MCF 10A (cell line): ENCODE measurements at regions of chr10 and their contacts with region 1.

Region 1: GRCh38 chr10:97072851-97073665 is 112.7 kb downstream of the SLIT1 start:
- DNase-seq: peak; percentile 79
- H3K4me3 Mint-ChIP-seq: no peak overlapping the region
- H3K27ac Mint-ChIP-seq: no peak overlapping the region
- H3K4me1 Mint-ChIP-seq: peaks cover 5% of the 10 kb centered on the region
- H3K27me3 Mint-ChIP-seq: peaks cover 35% of the 10 kb centered on the region
- CTCF ChIP-seq: peak; percentile 94

Region 2: DNA sequence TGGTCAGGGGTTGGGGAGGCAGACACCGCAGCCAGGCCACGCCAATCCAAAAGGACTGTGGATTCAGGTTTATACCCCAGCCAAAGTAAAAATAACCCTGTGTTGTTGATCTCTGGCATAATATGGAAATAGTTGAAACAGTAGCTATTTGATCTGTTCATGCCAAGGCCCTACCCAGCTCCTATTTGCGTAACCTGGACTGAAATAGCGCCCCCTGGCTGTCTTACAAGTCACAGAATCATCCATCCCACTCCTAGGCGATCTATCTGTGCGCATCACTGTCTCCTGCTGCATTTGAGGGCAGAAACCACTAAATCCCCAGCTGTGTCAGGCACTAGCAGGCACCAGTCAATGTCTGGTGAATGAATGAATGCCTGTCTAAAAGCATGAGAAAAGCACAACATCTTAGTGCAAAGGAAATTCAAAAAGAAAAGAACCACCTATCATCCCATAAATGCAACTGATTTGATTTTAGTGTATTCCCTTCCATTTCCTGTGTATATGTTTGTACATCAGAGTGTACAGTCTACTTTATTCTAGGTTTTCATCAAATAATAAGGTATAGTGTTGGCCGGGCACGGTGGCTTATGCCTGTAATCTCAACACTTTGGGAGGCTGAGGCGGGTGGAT is 47.3 kb before region 1 on chr10:
- CTCF ChIA-PET with region 1: interaction called, 11 read pairs
- POLR2A ChIA-PET with region 1: no interaction called
- intact Hi-C with region 1: no loop called
- DNase-seq: peak; percentile 76
- H3K4me3 Mint-ChIP-seq: no peak overlapping the region
- H3K27ac Mint-ChIP-seq: no peak overlapping the region
- H3K4me1 Mint-ChIP-seq: peaks cover 10% of the 10 kb centered on the region
- H3K27me3 Mint-ChIP-seq: peaks cover 15% of the 10 kb centered on the region
- CTCF ChIP-seq: peak; percentile 64

Region 3: DNA sequence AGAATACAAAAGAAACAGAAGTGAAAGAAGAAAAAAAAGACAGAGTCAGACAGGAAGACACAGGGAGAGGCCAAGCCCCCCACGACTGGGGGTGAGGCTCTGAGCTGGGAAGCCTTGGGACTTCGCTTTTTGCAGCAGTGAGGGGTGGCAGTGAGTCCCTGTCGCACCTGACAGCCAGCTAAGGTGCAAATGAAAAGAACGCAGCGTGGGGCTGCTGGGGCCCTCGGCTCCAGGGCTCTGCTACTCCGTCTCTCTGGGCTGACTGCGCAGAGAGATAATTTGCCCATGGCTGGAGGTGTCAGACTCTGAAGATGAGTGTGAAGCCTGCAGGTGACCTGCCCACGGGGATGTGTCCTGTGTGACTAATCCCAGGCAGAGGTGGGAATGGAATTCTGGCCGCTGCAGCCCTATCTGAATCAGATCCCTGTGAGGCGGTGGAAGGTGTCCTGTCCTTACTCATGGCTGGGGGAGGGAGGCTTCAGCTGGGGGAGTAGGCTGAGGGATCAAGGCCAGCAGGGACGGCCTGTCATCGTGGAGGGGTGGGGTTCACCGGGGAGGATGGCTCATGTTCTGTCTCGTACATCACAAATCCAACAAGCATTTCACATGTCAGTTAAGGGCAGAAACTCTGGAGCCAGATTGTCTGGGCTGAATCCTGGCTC is 16.3 kb after region 1 on chr10:
- CTCF ChIA-PET with region 1: interaction called, 29 read pairs
- POLR2A ChIA-PET with region 1: interaction called, 3 read pairs
- intact Hi-C with region 1: no loop called
- DNase-seq: peak; percentile 26
- H3K4me3 Mint-ChIP-seq: no peak overlapping the region
- H3K27ac Mint-ChIP-seq: no peak overlapping the region
- H3K4me1 Mint-ChIP-seq: no peaks in the 10 kb centered on the region
- H3K27me3 Mint-ChIP-seq: peaks cover 83% of the 10 kb centered on the region
- CTCF ChIP-seq: no peak

Region 4: DNA sequence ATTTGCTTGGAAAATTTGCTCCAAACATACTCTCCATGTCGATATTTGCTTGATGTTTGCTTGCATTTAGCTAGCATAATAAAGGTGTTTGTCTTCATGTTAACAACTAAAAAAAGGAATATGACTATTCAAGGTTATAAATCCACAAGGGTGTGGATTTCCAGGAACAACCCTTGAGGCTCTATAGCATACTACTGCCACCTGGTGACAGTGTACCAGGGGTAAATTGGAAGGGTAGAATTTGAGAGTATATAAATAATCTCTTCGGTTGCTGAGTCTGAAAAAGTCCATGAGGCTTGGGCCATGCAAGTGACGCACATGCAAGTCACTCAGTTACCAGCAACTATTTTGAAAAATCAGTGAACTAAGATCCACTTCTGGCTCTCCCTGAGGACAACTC is 44.3 kb after region 1 on chr10:
- CTCF ChIA-PET with region 1: interaction called, 68 read pairs
- POLR2A ChIA-PET with region 1: interaction called, 3 read pairs
- intact Hi-C with region 1: loop called (anchors 1 kb)
- DNase-seq: peak; percentile 37
- H3K4me3 Mint-ChIP-seq: no peak overlapping the region
- H3K27ac Mint-ChIP-seq: no peak overlapping the region
- H3K4me1 Mint-ChIP-seq: no peaks in the 10 kb centered on the region
- H3K27me3 Mint-ChIP-seq: peaks cover 58% of the 10 kb centered on the region
- CTCF ChIP-seq: peak; percentile 18

Region 5: GRCh38 chr10:97196223-97197029 is 123.4 kb after region 1 on chr10:
- CTCF ChIA-PET with region 1: interaction called, 12 read pairs
- POLR2A ChIA-PET with region 1: no interaction called
- intact Hi-C with region 1: no loop called
- DNase-seq: peak; percentile 55
- H3K4me3 Mint-ChIP-seq: peak overlapping the region; percentile 50
- H3K27ac Mint-ChIP-seq: no peak overlapping the region
- H3K4me1 Mint-ChIP-seq: no peaks in the 10 kb centered on the region
- H3K27me3 Mint-ChIP-seq: peaks cover 36% of the 10 kb centered on the region
- CTCF ChIP-seq: peak; percentile 69

Region 6: GRCh38 chr10:97217299-97217698 is 144.2 kb after region 1 on chr10:
- CTCF ChIA-PET with region 1: interaction called, 179 read pairs
- POLR2A ChIA-PET with region 1: no interaction called
- intact Hi-C with region 1: no loop called
- DNase-seq: no peak
- H3K4me3 Mint-ChIP-seq: no peak overlapping the region
- H3K27ac Mint-ChIP-seq: no peak overlapping the region
- H3K4me1 Mint-ChIP-seq: no peaks in the 10 kb centered on the region
- H3K27me3 Mint-ChIP-seq: no peaks in the 10 kb centered on the region
- CTCF ChIP-seq: no peak

Region 7: DNA sequence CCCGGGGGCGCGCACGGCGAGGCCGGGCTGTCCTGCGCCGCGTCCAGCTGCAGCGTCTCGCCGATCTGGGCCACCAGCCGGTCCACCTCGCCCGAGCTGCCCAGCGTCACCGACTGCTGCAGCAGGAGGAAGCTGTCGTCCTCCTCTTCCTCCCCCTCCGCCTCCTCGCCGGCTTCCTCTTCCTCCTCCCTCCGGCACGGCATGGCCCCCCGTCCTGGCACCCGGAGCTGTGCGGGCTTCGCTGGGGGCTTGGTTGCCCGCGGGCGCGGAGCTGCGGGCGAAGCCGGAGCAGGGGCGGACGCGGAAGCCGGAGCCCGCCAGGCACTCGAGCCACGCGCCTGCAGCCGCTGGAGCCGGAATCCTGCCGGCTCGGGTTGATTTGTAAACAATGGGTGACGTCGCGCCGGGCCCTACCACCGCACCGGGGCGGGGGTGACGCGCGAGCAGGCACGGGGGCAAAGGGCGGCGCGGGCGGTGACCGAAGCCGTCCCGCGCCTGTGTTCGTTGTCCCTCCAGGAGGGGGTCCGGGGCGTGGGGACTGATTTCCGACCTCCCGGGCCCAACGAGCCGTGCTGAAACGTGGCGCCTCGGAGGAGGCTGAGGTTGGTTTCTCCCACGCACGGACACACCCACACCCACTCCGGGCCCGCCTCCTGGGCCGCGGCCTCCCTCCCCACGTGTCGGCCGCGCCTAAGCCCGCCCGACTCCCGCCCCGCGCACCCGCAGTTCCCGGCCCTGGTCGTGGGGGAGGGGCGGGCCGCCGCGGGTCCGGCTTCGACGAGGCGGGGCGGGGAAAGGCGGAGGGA is 261.5 kb after region 1 on chr10 and contains the start of gene FRAT2:
- CTCF ChIA-PET with region 1: interaction called, 4 read pairs
- POLR2A ChIA-PET with region 1: no interaction called
- intact Hi-C with region 1: loop called (anchors 2 kb)
- DNase-seq: peak; percentile 89
- H3K4me3 Mint-ChIP-seq: peak within 1 kb of the TSS; percentile 93
- H3K27ac Mint-ChIP-seq: peak within 1 kb of the TSS; percentile 98
- H3K4me1 Mint-ChIP-seq: peaks cover 30% of the 10 kb centered on the region
- H3K27me3 Mint-ChIP-seq: no peaks in the 10 kb centered on the region
- CTCF ChIP-seq: no peak
- total RNA-seq, gene FRAT2: 9.0 and 11.4 TPM in 2 replicates